Gastrocnemius medialis (tissue), 4 donors: ENCODE measurements at regions of chr16 and their contacts with region 1.

Region 1: GRCh38 chr16:89945670-89946069 is 2.9 kb upstream of the DEF8 start:
- DNase-seq: no peak
- ATAC-seq: no peak
- H3K4me3 ChIP-seq: no peak overlapping the region
- H3K27ac ChIP-seq: no peak overlapping the region
- H3K4me1 ChIP-seq: peaks cover 9 to 12% of the 10 kb centered on the region in 2 donors
- H3K27me3 ChIP-seq: peaks cover 0 to 2% (median 0%) of the 10 kb centered on the region in 3 donors
- CTCF ChIP-seq: no peak
- POLR2A ChIP-seq: no peak

Region 2: GRCh38 chr16:89925596-89926079 is 20.0 kb before region 1 on chr16:
- in situ Hi-C with region 1: no loop called
- intact Hi-C with region 1: loop called (anchors 1 kb)
- DNase-seq: no peak
- ATAC-seq: peak in 1 of 2 donors; percentile 6
- H3K4me3 ChIP-seq: peak overlapping the region; percentile 50 to 68 (median 56)
- H3K27ac ChIP-seq: no peak overlapping the region
- H3K4me1 ChIP-seq: peaks cover 12 to 21% of the 10 kb centered on the region in 2 donors
- H3K27me3 ChIP-seq: peaks cover 42 to 49% (median 42%) of the 10 kb centered on the region in 3 donors
- CTCF ChIP-seq: no peak
- POLR2A ChIP-seq: no peak